ENCODE measurements at regions of chr3 and their contacts with region 1.

Region 1: GRCh38 chr3:194586836-194587235 is 46.4 kb downstream of the TMEM44 start:
- DNase-seq: no peak

Region 2: DNA sequence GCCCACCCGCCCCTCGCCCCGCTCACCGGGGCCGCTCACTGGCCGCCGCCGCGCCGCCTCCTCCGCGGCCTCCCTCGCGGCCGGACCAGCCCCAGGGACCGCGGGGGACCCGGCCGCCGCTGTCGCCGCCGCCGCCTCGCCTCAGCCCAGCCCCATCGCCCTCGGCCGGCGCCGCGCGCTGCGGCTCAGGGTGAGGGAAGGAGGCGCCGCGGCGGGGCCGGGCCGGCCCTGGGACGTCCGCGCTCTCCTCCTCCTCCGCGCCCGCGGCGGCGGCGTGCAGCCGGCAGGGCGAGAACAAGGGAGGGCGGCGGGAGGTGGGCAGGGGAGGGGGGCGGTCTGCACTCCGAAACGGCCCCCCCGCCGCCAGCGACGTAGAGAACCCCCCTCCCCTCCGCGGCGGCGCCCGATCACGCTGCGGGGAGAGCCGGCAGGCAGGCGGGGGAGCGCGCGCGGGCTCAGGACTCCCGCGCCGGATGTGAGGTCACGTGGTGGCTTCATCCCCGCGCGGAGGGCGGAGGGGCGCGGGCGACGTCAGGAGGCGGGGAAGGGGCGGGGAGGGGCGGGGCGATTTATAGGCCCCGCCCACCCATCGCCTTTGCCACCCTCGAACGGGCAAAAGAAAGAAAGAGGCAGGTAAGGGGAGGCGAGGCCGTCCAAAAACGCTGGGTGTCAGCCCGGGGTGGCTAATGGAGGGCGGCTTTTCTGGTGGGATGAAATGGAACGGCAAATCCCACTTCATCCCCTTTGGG is 100.1 kb before region 1 on chr3 and contains the start of gene ATP13A3:
- intact Hi-C with region 1: loop called in 1 of 2 experiments (anchors 5 kb)
- DNase-seq: peak; percentile 97
- total RNA-seq, gene ATP13A3: 86.3 to 152 TPM

Region 3: DNA sequence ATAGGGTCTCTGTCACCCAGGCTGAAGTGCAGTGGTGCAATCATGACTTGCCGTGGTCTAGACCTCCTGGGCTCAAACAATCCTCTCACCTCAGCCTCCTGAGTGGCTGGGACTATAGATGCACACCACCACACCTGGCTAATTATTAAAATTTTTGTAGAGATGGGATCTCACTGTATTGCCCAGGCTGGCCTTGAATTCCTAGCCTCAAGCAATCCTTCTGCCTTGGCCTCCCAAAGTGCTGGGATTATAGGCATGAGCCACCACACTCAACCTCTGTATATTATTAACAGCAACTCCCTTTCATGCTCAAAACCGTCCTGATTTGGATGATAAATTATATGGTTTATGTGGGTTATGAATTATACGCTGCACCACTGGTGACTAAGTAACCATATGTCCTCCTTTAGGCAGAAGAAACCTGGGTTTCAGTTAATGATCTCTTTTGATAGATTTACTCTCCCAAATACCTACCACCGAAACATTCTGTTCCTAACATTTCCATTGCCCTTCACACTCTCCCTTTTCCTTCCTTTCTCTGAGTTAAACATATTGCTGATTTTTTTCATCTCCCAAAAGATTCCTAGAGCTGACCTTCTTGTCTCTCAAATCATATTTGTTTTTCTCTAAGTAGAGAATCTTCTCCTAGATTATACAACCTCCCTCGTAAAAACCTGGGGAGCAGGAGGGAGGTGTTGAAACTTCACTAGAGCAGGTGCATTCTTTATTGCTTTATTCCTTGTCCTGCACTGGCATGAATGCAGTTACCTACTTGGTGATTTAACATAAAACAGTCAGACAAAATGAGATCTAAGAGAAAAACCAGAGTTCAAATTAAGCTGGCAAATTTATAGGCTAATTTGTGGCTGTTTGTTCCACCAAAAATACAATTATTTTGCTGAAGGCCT is 1667.8 kb after region 1 on chr3:
- intact Hi-C with region 1: no loop called
- DNase-seq: no peak

Measured in posterior vena cava (tissue), 2 donors.